Cardiac septum (tissue), 1 donor: ENCODE measurements at regions of chr7 and their contacts with region 1.

Region 1: GRCh38 chr7:14717816-14718215 is 184.7 kb downstream of the DGKB start:
- DNase-seq: no peak

Region 2: GRCh38 chr7:14766747-14767146 is 48.9 kb after region 1 on chr7:
- intact Hi-C with region 1: no loop called
- DNase-seq: no peak

Region 3: DNA sequence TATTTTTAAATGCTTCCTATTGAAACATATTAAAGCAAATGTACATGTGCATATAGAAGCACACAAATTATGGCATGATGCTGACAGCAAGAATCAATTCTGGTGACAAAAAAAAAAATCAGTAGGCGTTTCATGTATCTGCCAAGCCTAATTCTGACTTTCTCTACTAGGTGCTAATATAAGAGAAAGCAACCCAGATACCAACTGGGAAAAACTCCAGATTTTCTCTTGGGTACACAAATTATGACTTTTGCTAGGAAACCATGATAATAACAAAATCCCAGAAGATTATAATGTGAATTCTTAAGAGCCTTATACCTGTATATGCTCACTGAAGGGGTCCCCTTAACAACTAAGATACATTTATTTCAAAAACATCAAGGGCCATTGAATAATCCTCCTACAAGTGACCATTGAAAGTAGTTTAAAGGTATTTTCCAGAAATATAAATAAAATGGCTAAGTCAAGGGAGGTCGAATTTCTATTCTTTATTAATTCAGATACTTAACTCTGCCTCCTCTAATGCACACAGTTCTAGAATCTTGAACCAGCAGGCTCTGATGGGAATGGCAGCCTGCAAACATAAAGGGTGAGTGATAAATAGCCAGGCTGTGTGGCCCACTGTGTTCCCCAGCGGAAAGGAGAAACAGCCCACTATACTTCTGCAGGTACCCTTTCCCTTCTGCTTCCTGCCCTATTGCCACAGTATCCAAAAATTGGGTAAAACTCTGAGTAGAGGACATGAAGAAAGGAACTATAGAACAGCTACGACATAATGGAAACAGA is 100.2 kb after region 1 on chr7:
- intact Hi-C with region 1: no loop called
- DNase-seq: no peak

Region 4: DNA sequence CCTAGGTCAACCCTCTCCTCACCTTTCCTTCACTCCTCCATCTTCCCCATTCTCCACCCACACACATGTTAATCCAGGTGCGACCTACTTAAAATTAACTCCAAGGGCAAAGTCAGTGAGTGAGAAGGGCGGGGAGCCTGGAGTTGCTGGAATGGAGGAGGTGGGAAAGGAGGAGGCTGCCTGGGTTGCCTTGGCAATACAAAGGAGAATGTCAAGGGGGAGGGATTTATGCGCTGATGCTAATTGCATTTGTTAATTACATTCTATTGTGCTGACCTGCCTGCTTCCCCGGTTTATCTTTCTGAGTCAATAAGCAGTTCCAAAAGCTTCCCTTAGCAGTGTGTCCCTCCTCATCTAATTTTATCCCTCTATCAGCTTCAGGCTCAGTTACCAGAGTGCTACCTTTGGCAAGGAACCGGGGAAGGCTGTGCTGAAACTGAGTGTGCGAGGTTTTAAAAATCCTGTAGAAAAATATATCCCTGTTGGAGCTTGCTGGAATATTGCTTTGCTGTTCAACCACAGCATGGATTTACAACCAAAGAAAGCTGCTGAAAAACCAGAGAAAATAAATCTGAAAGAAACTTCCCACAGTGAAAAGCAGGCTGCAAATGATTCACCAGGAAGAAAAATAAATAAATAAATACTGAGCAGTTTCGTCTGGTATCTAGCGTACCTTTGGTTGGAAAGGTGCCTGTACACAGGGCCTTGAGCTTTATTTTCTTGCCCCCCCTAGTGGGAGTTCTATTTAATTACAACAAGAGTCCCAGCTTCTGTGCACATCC is 297.9 kb after region 1 on chr7:
- intact Hi-C with region 1: loop called (anchors 1 kb)
- DNase-seq: no peak